Transverse colon (tissue), 4 donors: ENCODE measurements at regions of chr12 and their contacts with region 1.

Region 1: DNA sequence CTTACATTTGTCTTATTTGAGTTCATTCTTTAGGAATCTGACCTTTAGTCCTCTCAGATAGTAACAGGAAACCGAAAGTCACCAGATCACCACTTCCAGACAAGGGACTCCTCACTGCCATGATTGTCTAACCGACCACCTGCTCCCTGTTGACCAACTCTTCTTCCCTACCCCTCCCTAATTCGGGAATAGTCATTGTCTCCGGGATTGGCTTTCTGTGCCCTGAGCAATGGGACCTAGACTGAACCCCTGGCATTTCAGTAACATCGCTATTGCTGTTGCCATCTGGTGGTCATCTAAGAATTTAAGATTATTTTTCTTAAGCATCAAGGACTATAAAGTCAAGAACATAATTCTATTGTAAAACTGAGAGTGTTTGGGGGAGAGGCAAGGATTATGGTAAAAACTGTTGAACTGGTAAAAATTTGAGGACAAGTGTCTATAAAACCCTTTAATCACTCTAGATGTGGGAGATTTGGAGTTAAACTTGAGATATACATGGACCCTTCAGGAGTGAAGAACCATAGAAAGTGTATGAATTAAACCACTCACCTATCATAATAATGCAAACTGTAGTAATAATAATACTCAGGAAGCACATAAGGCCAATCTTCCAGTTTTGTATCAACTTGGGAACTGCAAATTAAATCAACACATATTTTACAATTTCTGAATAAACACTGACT is 6.3 kb downstream of the CLEC2A start:
- DNase-seq: no peak
- H3K4me3 ChIP-seq: peak overlapping the region in 1 of 4 donors; percentile 27
- H3K27ac ChIP-seq: no peak overlapping the region
- H3K4me1 ChIP-seq: peaks cover 0 to 4% (median 0%) of the 10 kb centered on the region in 4 donors
- H3K27me3 ChIP-seq: no peaks in the 10 kb centered on the region
- CTCF ChIP-seq: peak; percentile 40 to 50 (median 44)
- EP300 ChIP-seq: no peak
- POLR2A ChIP-seq: no peak

Region 2: GRCh38 chr12:9741726-9742125 is 184.1 kb before region 1 on chr12:
- in situ Hi-C with region 1: loop called in 2 of 4 experiments (anchors 10 kb)
- intact Hi-C with region 1: loop called (anchors 5 kb)
- DNase-seq: peak; percentile 67
- H3K4me3 ChIP-seq: no peak overlapping the region
- H3K27ac ChIP-seq: peak overlapping the region in 3 of 4 donors; percentile 33 to 48 (median 45)
- H3K4me1 ChIP-seq: peaks cover 0 to 19% (median 4%) of the 10 kb centered on the region in 4 donors
- H3K27me3 ChIP-seq: no peaks in the 10 kb centered on the region
- CTCF ChIP-seq: no peak
- EP300 ChIP-seq: no peak
- POLR2A ChIP-seq: no peak

Region 3: GRCh38 chr12:9750276-9751203 is 175.3 kb before region 1 on chr12:
- in situ Hi-C with region 1: loop called in 3 of 4 experiments (anchors 5 to 10 kb)
- intact Hi-C with region 1: loop called (anchors 5 kb)
- DNase-seq: peak; percentile 31
- H3K4me3 ChIP-seq: no peak overlapping the region
- H3K27ac ChIP-seq: peak overlapping the region in 2 of 4 donors; percentile 19 to 21
- H3K4me1 ChIP-seq: peaks cover 0 to 8% (median 0%) of the 10 kb centered on the region in 4 donors
- H3K27me3 ChIP-seq: no peaks in the 10 kb centered on the region
- CTCF ChIP-seq: peak; percentile 73 to 89 (median 85)
- EP300 ChIP-seq: no peak
- POLR2A ChIP-seq: no peak

Region 4: GRCh38 chr12:9776778-9777177 is 149.1 kb before region 1 on chr12:
- in situ Hi-C with region 1: no loop called
- intact Hi-C with region 1: no loop called
- DNase-seq: no peak
- H3K4me3 ChIP-seq: no peak overlapping the region
- H3K27ac ChIP-seq: no peak overlapping the region
- H3K4me1 ChIP-seq: peaks cover 0 to 17% (median 7%) of the 10 kb centered on the region in 4 donors
- H3K27me3 ChIP-seq: no peaks in the 10 kb centered on the region
- CTCF ChIP-seq: no peak
- EP300 ChIP-seq: no peak
- POLR2A ChIP-seq: no peak

Region 5: GRCh38 chr12:9813821-9814809 is 111.7 kb before region 1 on chr12:
- in situ Hi-C with region 1: loop called in 2 of 4 experiments (anchors 5 to 10 kb)
- intact Hi-C with region 1: no loop called
- DNase-seq: peak; percentile 82
- H3K4me3 ChIP-seq: peak overlapping the region in 1 of 4 donors; percentile 26
- H3K27ac ChIP-seq: no peak overlapping the region
- H3K4me1 ChIP-seq: no peaks in the 10 kb centered on the region
- H3K27me3 ChIP-seq: no peaks in the 10 kb centered on the region
- CTCF ChIP-seq: peak; percentile 60 to 72 (median 67)
- EP300 ChIP-seq: no peak
- POLR2A ChIP-seq: no peak

Region 6: GRCh38 chr12:10097521-10097920 is 171.7 kb after region 1 on chr12:
- in situ Hi-C with region 1: no loop called
- intact Hi-C with region 1: no loop called
- DNase-seq: no peak
- H3K4me3 ChIP-seq: no peak overlapping the region
- H3K27ac ChIP-seq: peak overlapping the region in 1 of 4 donors; percentile 33
- H3K4me1 ChIP-seq: peaks cover 0 to 12% (median 3%) of the 10 kb centered on the region in 4 donors
- H3K27me3 ChIP-seq: no peaks in the 10 kb centered on the region
- CTCF ChIP-seq: no peak
- EP300 ChIP-seq: no peak
- POLR2A ChIP-seq: no peak